ENCODE measurements at regions of chr2 and their contacts with region 1.

Region 1: GRCh38 chr2:219278655-219279516 is at the start of gene DNAJB2:
- DNase-seq: peak; percentile 89
- ATAC-seq: peak; percentile 91
- H3K4me3 ChIP-seq: peak within 1 kb of the TSS; percentile 71
- H3K27ac ChIP-seq: peak within 1 kb of the TSS; percentile 90
- H3K4me1 ChIP-seq: peaks cover 26% of the 10 kb centered on the region
- H3K27me3 ChIP-seq: no peaks in the 10 kb centered on the region
- CTCF ChIP-seq: no peak
- EP300 ChIP-seq: peak; percentile 72 to 83
- POLR2A ChIP-seq: peak; percentile 91
- RAD21 ChIP-seq: no peak
- polyA plus RNA-seq, gene DNAJB2: 0.26 to 0.90 TPM

Region 2: GRCh38 chr2:218733171-218734021 is 545.5 kb before region 1 on chr2:
- CTCF ChIA-PET with region 1: no interaction called
- POLR2A ChIA-PET with region 1: no interaction called
- RAD21 ChIA-PET with region 1: no interaction called
- SMC1A ChIA-PET with region 1: no interaction called
- in situ Hi-C with region 1: no loop called
- intact Hi-C with region 1: no loop called
- DNase-seq: peak; percentile 44
- ATAC-seq: peak; percentile 99
- H3K4me3 ChIP-seq: no peak overlapping the region
- H3K27ac ChIP-seq: peak overlapping the region; percentile 72
- H3K4me1 ChIP-seq: peaks cover 12% of the 10 kb centered on the region
- H3K27me3 ChIP-seq: no peaks in the 10 kb centered on the region
- CTCF ChIP-seq: no peak
- EP300 ChIP-seq: no peak
- POLR2A ChIP-seq: no peak
- RAD21 ChIP-seq: no peak

Region 3: DNA sequence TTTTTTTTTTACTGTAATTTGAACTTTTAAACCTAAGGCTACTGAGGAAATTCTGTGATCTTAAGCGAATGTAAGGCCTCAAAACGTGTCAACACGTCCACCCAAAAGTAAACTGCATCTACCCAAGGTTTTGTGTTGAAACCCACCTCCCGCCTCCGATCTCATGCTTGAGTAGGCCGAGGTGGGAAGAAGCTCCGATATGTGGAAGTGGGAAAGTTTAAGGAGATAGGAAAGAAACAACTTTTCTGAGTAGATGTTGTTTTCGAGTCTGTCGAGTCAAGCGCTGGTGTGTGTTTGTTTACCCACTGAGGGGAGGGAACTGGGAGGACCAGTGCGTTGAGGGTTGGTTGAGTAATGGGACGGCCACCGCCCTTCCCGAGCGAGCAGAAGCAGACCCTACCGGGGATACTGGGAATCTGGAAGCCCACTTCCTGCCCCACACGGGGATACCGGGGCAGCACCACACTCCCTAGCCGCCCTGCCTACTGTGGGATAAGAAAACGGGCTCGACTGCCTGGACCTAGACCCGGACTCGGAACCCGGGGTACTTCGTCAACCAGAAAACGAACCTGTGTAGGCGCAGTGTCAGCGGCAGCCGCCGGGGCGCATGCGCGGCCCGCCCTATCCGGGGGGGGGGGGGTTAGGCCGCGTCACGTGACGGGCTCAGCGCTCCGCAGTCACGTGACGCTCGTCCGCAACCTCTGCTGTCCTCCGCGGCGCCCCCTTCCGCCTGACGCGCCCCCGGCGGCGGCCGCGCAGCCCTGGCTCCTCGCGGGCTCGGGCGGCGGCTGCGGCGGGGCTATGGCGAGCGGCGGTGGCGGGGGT is 101.1 kb before region 1 on chr2 and contains the start of gene RETREG2:
- CTCF ChIA-PET with region 1: interaction called, 32 read pairs
- POLR2A ChIA-PET with region 1: interaction called, 34 read pairs
- RAD21 ChIA-PET with region 1: interaction called, 12 read pairs
- SMC1A ChIA-PET with region 1: interaction called, 11 read pairs
- in situ Hi-C with region 1: no loop called
- intact Hi-C with region 1: loop called (anchors 5 kb)
- DNase-seq: peak; percentile 72
- ATAC-seq: peak; percentile 62
- H3K4me3 ChIP-seq: peak within 1 kb of the TSS; percentile 83
- H3K27ac ChIP-seq: peak within 1 kb of the TSS; percentile 98
- H3K4me1 ChIP-seq: peaks cover 10% of the 10 kb centered on the region
- H3K27me3 ChIP-seq: no peaks in the 10 kb centered on the region
- CTCF ChIP-seq: peak; percentile 26 to 53 (median 35); a peak in 4 of 6 replicates
- EP300 ChIP-seq: peak in 1 of 2 experiments; percentile 50; a peak in 2 of 4 replicates
- POLR2A ChIP-seq: peak; percentile 91
- RAD21 ChIP-seq: no peak
- polyA plus RNA-seq, gene RETREG2: 10.1 to 25.2 TPM

Region 4: GRCh38 chr2:219229305-219230058 is 49.4 kb before region 1 on chr2 and contains the starts of genes ANKZF1 and ATG9A:
- CTCF ChIA-PET with region 1: interaction called, 12 read pairs
- POLR2A ChIA-PET with region 1: interaction called, 20 read pairs
- RAD21 ChIA-PET with region 1: interaction called, 3 read pairs
- SMC1A ChIA-PET with region 1: interaction called, 3 read pairs
- in situ Hi-C with region 1: no loop called
- intact Hi-C with region 1: loop called (anchors 1 kb)
- DNase-seq: peak; percentile 94
- ATAC-seq: peak; percentile 99
- H3K4me3 ChIP-seq: peak within 1 kb of the TSS; percentile 97
- H3K27ac ChIP-seq: peak within 1 kb of the TSS; percentile 87
- H3K4me1 ChIP-seq: peaks cover 15% of the 10 kb centered on the region
- H3K27me3 ChIP-seq: no peaks in the 10 kb centered on the region
- CTCF ChIP-seq: no peak
- EP300 ChIP-seq: no peak
- POLR2A ChIP-seq: peak; percentile 90
- RAD21 ChIP-seq: no peak
- polyA plus RNA-seq, gene ANKZF1: 3.1 to 5.0 TPM
- polyA plus RNA-seq, gene ATG9A: 0.16 TPM in 1 of 2 experiments, not detected in the other

Region 5: GRCh38 chr2:219253753-219254590 is 24.9 kb before region 1 on chr2 and contains the start of gene TUBA4A:
- CTCF ChIA-PET with region 1: interaction called, 69 read pairs
- POLR2A ChIA-PET with region 1: interaction called, 160 read pairs
- RAD21 ChIA-PET with region 1: interaction called, 53 read pairs
- SMC1A ChIA-PET with region 1: interaction called, 98 read pairs
- in situ Hi-C with region 1: no loop called
- intact Hi-C with region 1: loop called (anchors 1 kb)
- DNase-seq: no peak
- ATAC-seq: peak; percentile 83
- H3K4me3 ChIP-seq: peak within 1 kb of the TSS; percentile 86
- H3K27ac ChIP-seq: peak within 1 kb of the TSS; percentile 77
- H3K4me1 ChIP-seq: peaks cover 22% of the 10 kb centered on the region
- H3K27me3 ChIP-seq: no peaks in the 10 kb centered on the region
- CTCF ChIP-seq: no peak
- EP300 ChIP-seq: 0 out of 4 replicates have a peak, but pooled peaks of 1 of the 2 experiments have one; percentile 23
- POLR2A ChIP-seq: peak; percentile 97
- RAD21 ChIP-seq: no peak
- polyA plus RNA-seq, gene TUBA4A: 58.2 to 88.6 TPM

Region 6: DNA sequence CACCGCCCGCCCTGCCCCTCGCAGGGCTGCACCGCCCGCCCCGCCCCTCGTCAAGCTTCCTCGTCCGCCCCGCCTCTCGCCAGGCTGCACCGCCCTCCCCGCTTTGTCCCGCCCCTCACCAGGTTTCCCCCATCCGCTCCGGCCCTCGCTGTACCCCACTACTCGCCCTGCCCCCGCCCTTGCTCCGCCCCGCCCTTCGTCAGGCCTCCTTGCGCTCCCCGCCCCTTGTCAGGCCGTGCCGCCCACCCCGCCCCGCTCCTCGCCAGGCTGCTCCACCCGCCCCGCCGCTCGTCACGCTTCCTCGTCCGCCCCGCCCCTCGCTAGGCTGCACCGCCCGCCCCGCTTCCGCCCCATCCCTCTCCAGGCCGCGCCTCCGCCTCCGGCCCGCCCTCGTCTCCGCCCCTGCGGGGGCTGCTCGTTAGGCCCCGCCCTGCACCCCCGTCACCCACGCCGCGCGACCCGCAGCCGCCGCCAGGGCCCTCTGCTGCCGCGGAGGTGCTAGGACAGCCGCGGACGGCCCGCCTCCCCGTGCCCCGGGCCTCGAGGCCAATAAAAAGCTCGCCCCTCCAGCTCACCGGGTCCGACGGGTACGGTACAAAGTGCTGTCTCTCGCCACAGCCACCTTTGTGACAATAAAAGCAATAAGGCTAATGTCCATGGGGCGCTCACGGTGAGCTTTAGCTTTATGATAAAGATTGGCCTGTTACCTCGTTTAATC is 109.4 kb after region 1 on chr2:
- CTCF ChIA-PET with region 1: interaction called, 3 read pairs
- POLR2A ChIA-PET with region 1: interaction called, 10 read pairs
- RAD21 ChIA-PET with region 1: no interaction called
- SMC1A ChIA-PET with region 1: no interaction called
- in situ Hi-C with region 1: no loop called
- intact Hi-C with region 1: no loop called
- DNase-seq: peak; percentile 83
- ATAC-seq: peak; percentile 86
- H3K4me3 ChIP-seq: peak overlapping the region; percentile 8; the same call in 1 of the 2 replicates
- H3K27ac ChIP-seq: no peak overlapping the region
- H3K4me1 ChIP-seq: peaks cover 5% of the 10 kb centered on the region
- H3K27me3 ChIP-seq: no peaks in the 10 kb centered on the region
- CTCF ChIP-seq: peak; percentile 48 to 67 (median 63); a peak in 5 of 6 replicates
- EP300 ChIP-seq: no peak
- POLR2A ChIP-seq: no peak
- RAD21 ChIP-seq: no peak